Activated CD4-positive, alpha-beta memory T cell treated with anti-CD3 and anti-CD28 coated beads for 36 hours (primary cell): ENCODE measurements at regions of chr2 and their contacts with region 1.

Region 1: DNA sequence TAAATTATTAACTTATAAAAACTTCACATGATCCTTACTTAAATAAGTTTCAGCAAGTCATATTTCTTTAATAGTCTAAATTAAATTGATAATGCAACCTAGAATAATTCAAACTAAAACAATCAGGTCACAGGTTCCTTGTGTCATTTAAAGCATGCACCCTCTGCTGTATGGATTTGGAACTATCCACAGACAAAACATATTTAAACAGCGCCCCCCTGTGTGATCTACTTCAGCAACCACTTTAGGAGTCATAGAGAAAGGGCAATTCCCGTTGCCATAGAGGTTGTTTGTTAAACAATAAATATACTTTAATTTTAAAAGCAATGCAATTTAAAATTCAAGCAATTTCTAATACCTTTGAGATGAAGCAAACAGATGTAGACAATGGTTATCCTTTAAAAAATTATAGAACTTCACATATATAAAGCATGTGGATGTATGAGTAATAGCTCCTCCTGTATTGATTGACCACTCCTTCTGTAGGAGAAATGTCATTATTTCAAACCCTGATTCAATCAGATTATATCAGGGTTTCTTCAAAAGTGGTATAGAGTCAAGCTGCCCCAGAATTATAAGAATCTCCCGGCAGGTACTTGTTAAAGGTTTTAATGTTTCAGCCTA is 21.2 kb downstream of the GRB14 start:
- DNase-seq: no peak
- H3K4me3 Mint-ChIP-seq: no peak overlapping the region
- H3K27ac Mint-ChIP-seq: no peak overlapping the region
- H3K4me1 Mint-ChIP-seq: no peaks in the 10 kb centered on the region
- H3K27me3 Mint-ChIP-seq: no peaks in the 10 kb centered on the region

Region 2: GRCh38 chr2:164438490-164439205 is 161.4 kb before region 1 on chr2:
- CTCF ChIA-PET with region 1: no interaction called
- POLR2A ChIA-PET with region 1: no interaction called
- intact Hi-C with region 1: no loop called
- DNase-seq: no peak
- H3K4me3 Mint-ChIP-seq: no peak overlapping the region
- H3K27ac Mint-ChIP-seq: no peak overlapping the region
- H3K4me1 Mint-ChIP-seq: no peaks in the 10 kb centered on the region
- H3K27me3 Mint-ChIP-seq: no peaks in the 10 kb centered on the region

Region 3: DNA sequence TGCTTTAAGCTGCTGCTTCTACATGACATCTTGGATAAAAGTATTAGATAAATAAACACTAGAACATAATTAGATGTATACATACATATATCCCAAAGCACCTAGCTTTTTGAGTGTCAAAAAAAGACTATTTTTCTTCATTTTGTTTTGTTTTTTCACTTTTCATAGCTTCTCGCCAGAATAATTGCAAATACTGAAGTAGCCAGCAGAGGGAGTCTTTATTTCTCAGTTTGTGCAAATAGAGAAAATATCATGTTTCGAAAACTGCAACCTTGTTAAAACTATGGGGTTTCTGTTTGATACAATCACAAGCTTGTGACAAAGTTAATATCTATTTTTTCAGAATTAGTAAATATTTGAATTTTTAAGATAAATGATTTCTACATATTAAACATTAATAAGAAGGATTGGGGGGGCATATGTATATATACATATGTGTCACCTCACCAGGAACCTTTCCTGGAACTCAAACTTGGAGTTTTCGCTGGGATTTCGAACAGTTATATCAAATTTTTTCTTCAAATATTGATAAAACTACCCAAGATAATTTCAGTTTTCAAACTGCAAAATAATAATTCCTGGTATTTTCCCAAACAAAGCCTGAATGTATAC is 39.8 kb before region 1 on chr2:
- CTCF ChIA-PET with region 1: no interaction called
- POLR2A ChIA-PET with region 1: no interaction called
- intact Hi-C with region 1: loop called (anchors 2 kb)
- DNase-seq: no peak
- H3K4me3 Mint-ChIP-seq: no peak overlapping the region
- H3K27ac Mint-ChIP-seq: no peak overlapping the region
- H3K4me1 Mint-ChIP-seq: no peaks in the 10 kb centered on the region
- H3K27me3 Mint-ChIP-seq: no peaks in the 10 kb centered on the region